Adrenal gland (tissue), 19 donors: ENCODE measurements at regions of chr17 and their contacts with region 1.

Region 1: DNA sequence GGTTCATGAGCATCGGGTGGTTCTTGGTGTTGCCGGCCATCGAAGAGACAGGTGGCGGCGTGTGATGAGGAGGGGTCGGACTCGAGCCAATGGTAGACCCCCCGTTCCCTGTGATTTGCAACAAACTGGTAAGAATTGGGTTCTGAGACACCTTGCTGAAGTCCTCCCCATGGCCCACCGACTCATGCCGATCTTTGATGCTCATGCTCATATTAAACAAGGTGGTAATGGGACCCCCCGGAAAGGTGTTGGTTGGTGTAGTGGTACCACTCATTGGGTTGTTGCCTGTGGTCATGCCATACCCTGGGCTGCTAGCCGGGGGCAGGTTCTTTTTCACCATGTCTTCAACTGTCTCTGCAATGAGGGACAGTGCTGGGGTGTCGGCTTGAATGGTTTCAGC is 8.9 kb upstream of the FBXL20 start:
- DNase-seq: peak in 1 of 7 donors; percentile 47
- H3K4me3 ChIP-seq: no peak overlapping the region
- H3K27ac ChIP-seq: no peak overlapping the region
- H3K4me1 ChIP-seq: no peaks in the 10 kb centered on the region
- H3K27me3 ChIP-seq: no peaks in the 10 kb centered on the region
- CTCF ChIP-seq: no peak
- POLR2A ChIP-seq: no peak

Region 2: DNA sequence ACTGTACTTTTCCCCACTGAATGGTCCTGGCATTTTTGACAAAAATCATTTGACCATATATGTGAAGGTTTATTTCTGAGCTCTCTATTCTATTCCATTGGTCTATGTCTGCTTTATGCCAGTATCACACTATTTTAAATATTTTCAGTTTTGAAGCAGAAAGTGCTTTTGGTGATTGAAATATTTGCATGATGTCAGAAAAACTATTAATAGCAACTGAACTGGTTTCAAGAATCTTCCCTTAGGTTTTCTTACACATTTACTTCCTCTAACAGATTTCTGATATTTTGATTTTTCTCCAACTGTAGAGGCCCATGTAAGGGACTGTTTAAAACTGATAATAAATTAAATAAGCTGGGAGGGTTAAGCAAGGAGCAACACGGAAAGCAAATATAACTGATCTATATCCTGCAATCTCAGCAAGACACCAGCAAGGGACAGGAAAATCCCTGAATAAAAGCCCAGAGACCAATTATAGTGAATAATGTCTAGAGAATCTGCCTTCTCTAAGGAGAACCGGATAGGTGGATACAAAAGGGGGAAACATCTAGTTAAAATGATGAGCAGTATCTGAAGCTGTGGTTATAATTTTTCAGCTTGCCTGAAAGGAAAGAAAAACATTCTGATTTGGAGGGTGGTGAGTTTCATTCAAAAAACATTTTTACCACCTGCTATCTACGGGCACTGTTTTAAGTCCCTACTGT is 103.6 kb before region 1 on chr17:
- intact Hi-C with region 1: no loop called
- DNase-seq: no peak
- H3K4me3 ChIP-seq: no peak overlapping the region
- H3K27ac ChIP-seq: peak overlapping the region in 1 of 5 donors; percentile 1
- H3K4me1 ChIP-seq: peaks cover 0 to 7% of the 10 kb centered on the region in 2 donors
- H3K27me3 ChIP-seq: no peaks in the 10 kb centered on the region
- CTCF ChIP-seq: no peak
- POLR2A ChIP-seq: no peak

Region 3: DNA sequence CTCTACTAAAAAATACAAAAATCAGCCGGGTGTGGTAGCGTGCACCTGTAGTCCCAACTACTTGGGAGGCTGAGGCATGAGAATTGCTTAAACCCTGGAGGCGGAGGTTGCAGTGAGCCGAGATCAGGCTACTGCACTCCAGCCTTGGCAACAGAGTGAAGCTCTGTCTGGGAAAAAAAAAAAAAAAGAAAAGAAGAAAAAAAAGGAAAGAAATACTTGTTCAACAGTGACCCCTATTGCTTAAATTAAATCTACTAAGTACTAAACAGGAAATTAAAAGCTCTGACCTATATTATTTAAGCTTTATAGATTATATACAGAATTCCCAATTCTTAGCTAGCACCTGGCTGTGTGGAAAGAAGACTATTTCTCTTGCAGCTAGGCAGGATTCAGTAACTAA is 57.8 kb before region 1 on chr17:
- intact Hi-C with region 1: no loop called
- DNase-seq: peak in 1 of 7 donors; percentile 19
- H3K4me3 ChIP-seq: no peak overlapping the region
- H3K27ac ChIP-seq: no peak overlapping the region
- H3K4me1 ChIP-seq: peaks cover 0 to 21% of the 10 kb centered on the region in 2 donors
- H3K27me3 ChIP-seq: no peaks in the 10 kb centered on the region
- CTCF ChIP-seq: peak in 3 of 6 experiments; percentile 18 to 29 (median 25)
- POLR2A ChIP-seq: no peak

Region 4: DNA sequence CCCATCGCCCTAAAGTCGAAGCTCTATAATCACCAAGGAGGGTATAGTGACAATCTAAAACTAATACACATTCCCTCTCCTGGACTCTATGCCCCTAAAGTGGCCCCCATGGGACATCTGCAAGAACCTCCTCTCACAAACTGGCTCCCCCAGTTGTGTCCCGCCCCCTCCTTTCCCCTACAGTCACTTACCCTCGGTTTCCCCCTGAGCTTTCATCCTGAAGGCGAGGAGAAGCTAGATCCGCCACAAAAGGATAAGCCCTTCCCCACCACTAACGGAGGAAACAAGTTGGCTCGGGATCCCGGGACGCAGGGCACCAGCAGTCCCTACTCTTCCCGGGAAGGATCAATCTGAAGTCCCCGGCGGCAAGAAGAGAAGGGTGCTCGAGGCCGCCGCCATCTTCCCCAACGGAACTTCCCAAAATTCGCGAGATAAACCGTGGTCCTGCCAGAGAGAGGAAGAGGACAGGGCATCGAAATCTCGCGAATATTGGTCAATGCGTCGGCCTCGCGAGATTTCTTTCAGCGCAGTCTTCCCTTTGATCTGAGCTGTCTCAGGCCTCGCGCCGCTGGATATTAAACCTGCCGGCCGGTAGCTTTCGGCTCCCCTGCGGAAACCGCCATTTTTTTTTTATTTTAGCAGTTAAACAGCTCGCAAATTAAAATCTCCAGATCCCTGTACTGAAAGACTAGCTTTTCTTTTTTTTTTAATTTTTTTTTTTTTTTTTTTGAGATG is 40.7 kb after region 1 on chr17 and contains the start of gene MED1:
- intact Hi-C with region 1: no loop called
- DNase-seq: peak; percentile 94 to 98 (median 96)
- H3K4me3 ChIP-seq: peak within 1 kb of the TSS; percentile 84 to 99 (median 91)
- H3K27ac ChIP-seq: peak within 1 kb of the TSS in 4 of 5 donors; percentile 58 to 90 (median 79)
- H3K4me1 ChIP-seq: peaks cover 0 to 19% of the 10 kb centered on the region in 2 donors
- H3K27me3 ChIP-seq: no peaks in the 10 kb centered on the region
- CTCF ChIP-seq: no peak
- POLR2A ChIP-seq: peak; percentile 25 to 83
- total RNA-seq, gene MED1: 13.5 to 29.4 (median 26.4) TPM

Region 5: DNA sequence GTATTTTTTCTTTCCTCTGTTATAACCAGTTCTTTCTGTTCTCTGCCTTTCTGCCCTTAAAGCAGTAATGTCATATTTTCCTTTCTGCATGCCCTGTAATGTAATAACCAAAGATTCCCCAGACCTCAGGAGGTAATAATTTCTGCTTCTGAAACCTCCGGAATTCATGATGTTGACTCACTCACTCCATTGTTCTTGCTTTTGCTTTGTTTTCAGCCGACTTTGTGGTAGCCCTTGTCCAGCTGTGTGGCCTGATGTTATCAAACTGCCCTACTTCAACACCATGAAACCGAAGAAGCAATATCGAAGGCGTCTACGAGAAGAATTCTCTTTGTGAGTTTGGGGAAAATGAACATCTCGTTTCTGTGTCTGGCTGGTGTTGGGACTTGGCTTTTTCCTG is 106.9 kb after region 1 on chr17:
- intact Hi-C with region 1: loop called in 1 of 2 experiments (anchors 10 kb)
- DNase-seq: no peak
- H3K4me3 ChIP-seq: no peak overlapping the region
- H3K27ac ChIP-seq: no peak overlapping the region
- H3K4me1 ChIP-seq: peaks cover 0 to 7% of the 10 kb centered on the region in 2 donors
- H3K27me3 ChIP-seq: no peaks in the 10 kb centered on the region
- CTCF ChIP-seq: no peak
- POLR2A ChIP-seq: no peak